ENCODE measurements at regions of chr11 and their contacts with region 1.

Region 1: GRCh38 chr11:62726915-62727763 is at the start of gene HNRNPUL2:
- DNase-seq: peak; percentile 99
- ATAC-seq: peak; percentile 79
- H3K4me3 ChIP-seq: peak within 1 kb of the TSS; percentile 96 to 100 (median 99)
- H3K4me3 Mint-ChIP-seq: peak within 1 kb of the TSS; percentile 95
- H3K27ac ChIP-seq: peak within 1 kb of the TSS; percentile 90 to 91
- H3K27ac Mint-ChIP-seq: peak within 1 kb of the TSS; percentile 99
- H3K4me1 ChIP-seq: peaks cover 37 to 41% of the 10 kb centered on the region in 2 donors
- H3K4me1 Mint-ChIP-seq: peaks cover 53% of the 10 kb centered on the region
- H3K27me3 ChIP-seq: no peaks in the 10 kb centered on the region
- H3K27me3 Mint-ChIP-seq: no peaks in the 10 kb centered on the region
- CTCF ChIP-seq: no peak
- total RNA-seq, gene HNRNPUL2: 70.4 and 78.2 TPM in 2 replicates

Region 2: DNA sequence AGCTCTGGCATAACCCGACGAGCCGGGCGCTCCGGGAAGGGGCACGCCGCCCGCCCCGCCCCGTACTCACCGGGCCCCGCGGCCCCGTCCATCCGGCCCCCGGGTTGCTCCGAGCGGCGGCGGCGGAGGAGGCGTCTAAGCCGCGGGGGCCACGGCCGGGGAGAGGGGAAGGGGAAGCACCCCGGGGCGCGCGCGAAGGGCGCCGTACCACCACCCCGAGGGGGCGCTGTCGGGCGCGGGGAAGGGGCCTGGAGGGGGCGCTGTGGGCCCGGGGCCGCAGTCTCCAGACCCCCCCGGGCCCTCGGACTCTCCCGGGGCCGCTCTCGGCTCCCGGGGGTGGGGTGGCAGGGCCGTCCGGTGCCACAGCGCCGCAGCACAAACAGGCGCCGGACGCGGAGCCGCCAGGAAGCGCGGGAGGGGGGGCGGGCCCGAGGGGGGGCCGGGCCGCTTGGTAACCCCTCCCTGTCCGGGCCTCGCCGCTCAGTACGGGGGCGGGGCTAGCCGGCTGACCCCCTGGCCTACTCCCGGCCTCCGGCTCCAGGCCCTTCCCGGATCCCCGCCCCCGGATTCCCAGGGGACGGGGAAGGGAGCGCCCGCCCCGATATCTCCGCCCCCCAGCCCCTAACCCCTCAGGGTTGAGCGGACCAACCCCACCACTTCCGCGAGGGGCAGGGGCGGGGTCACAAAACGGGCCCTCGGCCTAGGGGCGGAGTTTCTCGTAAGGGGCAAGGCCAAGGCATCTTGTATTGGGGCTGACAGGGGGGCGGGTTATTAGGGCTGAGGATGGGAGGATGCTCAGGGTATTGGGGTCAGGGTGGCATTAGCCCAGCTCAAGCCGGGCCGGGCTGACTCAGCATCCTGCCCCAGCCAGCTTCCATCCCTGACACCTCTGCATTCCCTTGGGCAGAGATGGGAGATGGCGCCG is 114.5 kb before region 1 on chr11 and contains the starts of genes EML3 and ROM1:
- CTCF ChIA-PET with region 1: no interaction called
- POLR2A ChIA-PET with region 1: no interaction called
- intact Hi-C with region 1: loop called (anchors 2 kb)
- DNase-seq: peak; percentile 92
- ATAC-seq: peak; percentile 79
- H3K4me3 ChIP-seq: peak within 1 kb of the TSS; percentile 70 to 84 (median 75)
- H3K4me3 Mint-ChIP-seq: peak within 1 kb of the TSS; percentile 97
- H3K27ac ChIP-seq: peak within 1 kb of the TSS; percentile 76 to 96
- H3K27ac Mint-ChIP-seq: peak within 1 kb of the TSS; percentile 99
- H3K4me1 ChIP-seq: peaks cover 10 to 25% of the 10 kb centered on the region in 2 donors
- H3K4me1 Mint-ChIP-seq: peaks cover 25% of the 10 kb centered on the region
- H3K27me3 ChIP-seq: no peaks in the 10 kb centered on the region
- H3K27me3 Mint-ChIP-seq: no peaks in the 10 kb centered on the region
- CTCF ChIP-seq: peak; percentile 99
- total RNA-seq, gene EML3: 127 and 135 TPM in 2 replicates
- total RNA-seq, gene ROM1: 0.68 and 2.0 TPM in 2 replicates

Region 3: GRCh38 chr11:62665075-62665598 is 62.0 kb before region 1 on chr11 and contains the starts of genes C11orf98 and CSKMT:
- CTCF ChIA-PET with region 1: no interaction called
- POLR2A ChIA-PET with region 1: interaction called, 14 read pairs
- intact Hi-C with region 1: loop called (anchors 2 kb)
- DNase-seq: peak; percentile 95
- ATAC-seq: peak; percentile 90
- H3K4me3 ChIP-seq: peak within 1 kb of the TSS; percentile 79 to 98 (median 91)
- H3K4me3 Mint-ChIP-seq: peak within 1 kb of the TSS; percentile 97
- H3K27ac ChIP-seq: peak within 1 kb of the TSS; percentile 73 to 81
- H3K27ac Mint-ChIP-seq: peak within 1 kb of the TSS; percentile 93
- H3K4me1 ChIP-seq: peaks cover 17 to 35% of the 10 kb centered on the region in 2 donors
- H3K4me1 Mint-ChIP-seq: peaks cover 45% of the 10 kb centered on the region
- H3K27me3 ChIP-seq: no peaks in the 10 kb centered on the region
- H3K27me3 Mint-ChIP-seq: no peaks in the 10 kb centered on the region
- CTCF ChIP-seq: no peak
- total RNA-seq, gene C11orf98: 48.1 and 52.0 TPM in 2 replicates
- total RNA-seq, gene CSKMT: 57.3 and 78.7 TPM in 2 replicates

Region 4: DNA sequence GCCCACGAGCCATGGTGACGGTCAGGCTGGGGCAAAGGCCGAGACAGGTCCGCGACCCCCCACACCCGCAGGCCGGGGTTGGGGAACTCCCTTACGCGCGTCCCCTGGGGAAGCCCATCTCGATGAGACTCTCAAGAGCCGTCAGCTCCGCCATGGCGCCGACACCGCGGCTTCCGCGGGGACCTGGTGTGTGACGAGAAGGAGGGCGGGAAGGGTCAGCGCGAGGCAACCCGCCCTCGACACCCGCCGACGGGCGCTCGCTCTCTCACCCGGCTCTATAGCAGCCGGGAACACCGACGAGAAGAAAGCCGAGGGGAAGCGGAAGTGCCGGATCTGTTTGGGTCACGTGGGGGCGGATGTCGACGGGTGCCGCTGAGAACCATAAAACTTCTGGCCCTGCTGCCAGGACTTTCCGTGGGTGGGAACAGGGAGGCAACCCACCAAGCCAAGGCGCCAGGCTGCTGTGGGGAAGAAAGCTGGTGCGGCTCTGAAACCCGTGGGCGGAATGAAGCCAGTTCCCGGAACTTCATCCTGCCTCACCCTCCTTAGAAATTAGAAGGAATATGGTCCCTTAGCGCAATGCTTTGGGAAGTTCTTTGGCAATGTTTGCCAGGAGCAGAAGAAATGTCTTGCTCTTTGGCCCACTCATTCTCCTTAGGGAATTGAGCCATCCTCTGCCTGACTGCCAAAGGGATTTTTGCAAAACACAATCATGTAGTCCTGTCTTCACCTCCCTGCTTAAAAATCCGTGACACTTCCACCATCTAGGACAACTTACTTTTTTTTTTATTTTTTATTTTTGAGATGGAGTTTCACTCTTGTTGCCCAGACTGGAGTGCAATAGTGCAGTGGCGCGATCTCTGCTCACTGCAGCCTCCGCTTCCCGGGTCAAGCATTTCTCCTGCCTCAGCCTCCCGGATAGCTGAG is 48.1 kb before region 1 on chr11 and contains the start of gene UBXN1:
- CTCF ChIA-PET with region 1: interaction called, 7 read pairs
- POLR2A ChIA-PET with region 1: interaction called, 6 read pairs
- intact Hi-C with region 1: loop called (anchors 1 kb)
- DNase-seq: peak; percentile 92
- ATAC-seq: peak; percentile 77
- H3K4me3 ChIP-seq: peak within 1 kb of the TSS; percentile 71 to 99 (median 98)
- H3K4me3 Mint-ChIP-seq: peak within 1 kb of the TSS; percentile 88
- H3K27ac ChIP-seq: peak within 1 kb of the TSS; percentile 83 to 99
- H3K27ac Mint-ChIP-seq: peak within 1 kb of the TSS; percentile 93
- H3K4me1 ChIP-seq: peaks cover 9 to 20% of the 10 kb centered on the region in 2 donors
- H3K4me1 Mint-ChIP-seq: peaks cover 34% of the 10 kb centered on the region
- H3K27me3 ChIP-seq: no peaks in the 10 kb centered on the region
- H3K27me3 Mint-ChIP-seq: no peaks in the 10 kb centered on the region
- CTCF ChIP-seq: no peak
- total RNA-seq, gene UBXN1: 186 and 193 TPM in 2 replicates

Region 5: GRCh38 chr11:62771144-62772021 is 44.2 kb after region 1 on chr11 and contains the start of gene TAF6L:
- CTCF ChIA-PET with region 1: interaction called, 5 read pairs
- POLR2A ChIA-PET with region 1: interaction called, 6 read pairs
- intact Hi-C with region 1: loop called (anchors 1 kb)
- DNase-seq: peak; percentile 88
- ATAC-seq: peak; percentile 90
- H3K4me3 ChIP-seq: peak within 1 kb of the TSS; percentile 58 to 97 (median 68)
- H3K4me3 Mint-ChIP-seq: peak within 1 kb of the TSS; percentile 95
- H3K27ac ChIP-seq: peak within 1 kb of the TSS; percentile 63 to 84
- H3K27ac Mint-ChIP-seq: peak within 1 kb of the TSS; percentile 96
- H3K4me1 ChIP-seq: peaks cover 15 to 23% of the 10 kb centered on the region in 2 donors
- H3K4me1 Mint-ChIP-seq: peaks cover 26% of the 10 kb centered on the region
- H3K27me3 ChIP-seq: no peaks in the 10 kb centered on the region
- H3K27me3 Mint-ChIP-seq: no peaks in the 10 kb centered on the region
- CTCF ChIP-seq: no peak
- total RNA-seq, gene TAF6L: 43.2 and 48.2 TPM in 2 replicates

Region 6: GRCh38 chr11:62831520-62832335 is 104.6 kb after region 1 on chr11 and contains the start of gene STX5:
- CTCF ChIA-PET with region 1: interaction called, 5 read pairs
- POLR2A ChIA-PET with region 1: interaction called, 15 read pairs
- intact Hi-C with region 1: loop called (anchors 2 kb)
- DNase-seq: peak; percentile 100
- ATAC-seq: peak; percentile 95
- H3K4me3 ChIP-seq: peak within 1 kb of the TSS; percentile 69 to 96 (median 92)
- H3K4me3 Mint-ChIP-seq: peak within 1 kb of the TSS; percentile 92
- H3K27ac ChIP-seq: peak within 1 kb of the TSS; percentile 96 to 99
- H3K27ac Mint-ChIP-seq: peak within 1 kb of the TSS; percentile 97
- H3K4me1 ChIP-seq: peaks cover 16 to 30% of the 10 kb centered on the region in 2 donors
- H3K4me1 Mint-ChIP-seq: peaks cover 43% of the 10 kb centered on the region
- H3K27me3 ChIP-seq: no peaks in the 10 kb centered on the region
- H3K27me3 Mint-ChIP-seq: no peaks in the 10 kb centered on the region
- CTCF ChIP-seq: no peak
- total RNA-seq, gene STX5: 98.1 and 99.1 TPM in 2 replicates

Region 7: GRCh38 chr11:62855571-62856332 is 128.6 kb after region 1 on chr11:
- CTCF ChIA-PET with region 1: interaction called, 6 read pairs
- POLR2A ChIA-PET with region 1: interaction called, 16 read pairs
- intact Hi-C with region 1: loop called (anchors 1 kb)
- DNase-seq: peak; percentile 99
- ATAC-seq: peak; percentile 92
- H3K4me3 ChIP-seq: peak overlapping the region; percentile 68 to 100 (median 99)
- H3K4me3 Mint-ChIP-seq: peak overlapping the region; percentile 99
- H3K27ac ChIP-seq: peak overlapping the region; percentile 65 to 84
- H3K27ac Mint-ChIP-seq: peak overlapping the region; percentile 98
- H3K4me1 ChIP-seq: peaks cover 39 to 58% of the 10 kb centered on the region in 2 donors
- H3K4me1 Mint-ChIP-seq: peaks cover 60% of the 10 kb centered on the region
- H3K27me3 ChIP-seq: no peaks in the 10 kb centered on the region
- H3K27me3 Mint-ChIP-seq: no peaks in the 10 kb centered on the region
- CTCF ChIP-seq: no peak